Vagina (tissue), 2 donors: ENCODE measurements at regions of chr5 and their contacts with region 1.

Region 1: DNA sequence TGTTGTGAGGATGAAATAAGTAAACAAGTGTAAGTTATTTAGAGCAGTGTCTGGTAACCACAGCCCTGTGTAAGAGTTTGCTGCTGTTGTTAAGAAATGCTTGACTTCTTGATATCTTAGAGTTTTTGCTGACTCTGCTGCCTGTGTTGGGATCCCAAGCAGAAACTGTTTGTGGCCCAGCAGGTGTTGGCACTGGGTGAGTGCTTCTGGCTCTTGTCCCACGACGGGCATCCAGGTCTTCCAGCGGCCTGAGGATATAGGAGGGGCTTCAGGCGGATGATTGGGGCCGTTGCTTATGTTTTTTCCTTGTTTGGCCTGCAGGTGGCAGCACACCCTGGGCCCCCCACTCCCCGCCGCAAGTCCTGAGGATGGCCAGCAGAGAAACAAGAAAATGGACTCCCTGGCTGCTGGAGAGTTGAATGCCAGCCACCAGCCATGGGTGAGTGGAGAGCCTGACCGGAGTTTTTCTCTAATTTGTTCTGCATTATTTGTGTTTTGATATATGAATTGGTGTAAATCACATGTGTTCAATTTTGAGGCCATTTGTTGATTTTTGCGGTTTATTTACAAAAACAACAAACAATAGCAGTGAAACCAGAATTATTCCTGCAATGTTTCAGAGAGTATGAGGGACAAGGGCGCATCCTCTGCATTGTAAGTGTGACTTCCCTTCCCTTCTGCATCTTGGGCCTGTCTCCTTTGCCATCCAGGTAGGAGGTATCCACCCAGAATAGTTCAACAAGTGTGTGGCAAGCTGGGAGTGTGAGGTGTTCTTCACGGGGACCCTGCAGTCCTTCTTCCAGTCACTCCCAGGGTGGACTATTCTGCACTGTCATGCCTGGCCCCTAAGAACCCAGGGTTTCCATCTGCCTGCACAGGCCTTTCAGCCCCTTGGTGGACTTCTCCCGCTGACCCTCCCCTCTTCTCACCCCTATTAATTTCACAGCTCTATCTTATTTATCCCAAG is 50.3 kb downstream of the SLC22A5 start:
- DNase-seq: peak in 1 of 2 donors; percentile 88
- H3K4me3 ChIP-seq: no peak overlapping the region
- H3K27ac ChIP-seq: peak overlapping the region; percentile 79
- H3K4me1 ChIP-seq: peaks cover 96% of the 10 kb centered on the region
- H3K27me3 ChIP-seq: no peaks in the 10 kb centered on the region
- CTCF ChIP-seq: peak; percentile 75 to 90 (median 79)
- POLR2A ChIP-seq: no peak

Region 2: GRCh38 chr5:132489871-132490485 is 70.2 kb after region 1 on chr5:
- intact Hi-C with region 1: loop called (anchors 5 kb)
- DNase-seq: peak; percentile 90 to 91
- H3K4me3 ChIP-seq: peak overlapping the region; percentile 78 to 86
- H3K27ac ChIP-seq: peak overlapping the region; percentile 98
- H3K4me1 ChIP-seq: peaks cover 75% of the 10 kb centered on the region
- H3K27me3 ChIP-seq: no peaks in the 10 kb centered on the region
- CTCF ChIP-seq: peak in 1 of 3 experiments; percentile 22
- POLR2A ChIP-seq: no peak

Region 3: DNA sequence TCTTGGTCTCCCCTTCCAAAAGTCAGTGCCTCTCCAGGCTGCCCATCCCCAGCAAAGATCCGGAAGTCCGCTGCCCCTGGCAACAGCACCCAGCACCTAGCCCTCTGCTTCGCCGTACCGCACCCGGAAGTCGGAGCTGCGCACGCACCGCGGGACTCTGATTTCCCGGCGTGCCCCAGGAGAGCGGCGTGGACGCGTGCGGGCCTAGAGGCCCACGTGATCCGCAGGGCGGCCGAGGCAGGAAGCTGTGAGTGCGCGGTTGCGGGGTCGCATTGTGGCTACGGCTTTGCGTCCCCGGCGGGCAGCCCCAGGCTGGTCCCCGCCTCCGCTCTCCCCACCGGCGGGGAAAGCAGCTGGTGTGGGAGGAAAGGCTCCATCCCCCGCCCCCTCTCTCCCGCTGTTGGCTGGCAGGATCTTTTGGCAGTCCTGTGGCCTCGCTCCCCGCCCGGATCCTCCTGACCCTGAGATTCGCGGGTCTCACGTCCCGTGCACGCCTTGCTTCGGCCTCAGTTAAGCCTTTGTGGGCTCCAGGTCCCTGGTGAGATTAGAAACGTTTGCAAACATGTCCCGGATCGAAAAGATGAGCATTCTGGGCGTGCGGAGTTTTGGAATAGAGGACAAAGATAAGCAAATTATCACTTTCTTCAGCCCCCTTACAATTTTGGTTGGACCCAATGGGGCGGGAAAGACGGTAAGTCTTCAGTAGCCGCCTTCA is 137.1 kb after region 1 on chr5 and contains the start of gene RAD50:
- intact Hi-C with region 1: no loop called
- DNase-seq: peak in 1 of 2 donors; percentile 91
- H3K4me3 ChIP-seq: peak within 1 kb of the TSS; percentile 69 to 70
- H3K27ac ChIP-seq: peak within 1 kb of the TSS; percentile 83
- H3K4me1 ChIP-seq: peaks cover 23% of the 10 kb centered on the region
- H3K27me3 ChIP-seq: no peaks in the 10 kb centered on the region
- CTCF ChIP-seq: no peak
- POLR2A ChIP-seq: peak in 1 of 2 donors; percentile 64
- total RNA-seq, gene RAD50: 29.0 TPM

Region 4: GRCh38 chr5:133801955-133802751 is 1382.4 kb after region 1 on chr5:
- intact Hi-C with region 1: no loop called
- DNase-seq: no peak
- H3K4me3 ChIP-seq: no peak overlapping the region
- H3K27ac ChIP-seq: no peak overlapping the region
- H3K4me1 ChIP-seq: no peaks in the 10 kb centered on the region
- H3K27me3 ChIP-seq: no peaks in the 10 kb centered on the region
- CTCF ChIP-seq: no peak
- POLR2A ChIP-seq: no peak